Right lobe of liver (tissue), 6 donors: ENCODE measurements at regions of chr3 and their contacts with region 1.

Region 1: GRCh38 chr3:194404365-194405140 is 5.5 kb upstream of the GP5 start:
- DNase-seq: no peak
- ATAC-seq: peak; percentile 34 to 78 (median 68)
- H3K4me3 ChIP-seq: no peak overlapping the region
- H3K27ac ChIP-seq: no peak overlapping the region
- H3K4me1 ChIP-seq: no peaks in the 10 kb centered on the region
- H3K27me3 ChIP-seq: no peaks in the 10 kb centered on the region
- CTCF ChIP-seq: peak; percentile 63 to 78 (median 69)
- POLR2A ChIP-seq: no peak

Region 2: DNA sequence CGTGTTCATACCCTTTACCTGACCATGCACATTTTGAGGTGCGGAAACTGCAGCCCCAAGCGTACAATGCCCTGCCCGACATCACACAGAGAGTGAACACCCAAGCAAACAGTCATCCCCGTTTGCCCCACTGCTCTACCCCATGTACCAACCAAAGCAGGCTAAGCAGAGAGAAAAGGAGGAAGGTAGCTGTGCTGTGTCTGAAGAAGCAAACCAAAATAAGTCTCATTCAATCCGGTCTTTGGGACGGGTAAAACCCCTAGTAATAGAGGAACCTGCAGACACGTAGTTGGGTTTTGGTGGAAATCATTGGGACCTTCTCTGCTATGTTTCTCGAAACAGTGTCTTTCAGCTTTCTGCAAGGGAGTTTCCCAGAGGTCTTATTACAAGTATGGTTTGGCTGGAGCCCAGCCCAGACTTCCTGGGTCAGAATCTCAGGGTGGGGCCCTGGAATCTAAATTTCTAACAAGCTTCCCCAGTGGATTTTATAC is 433.2 kb before region 1 on chr3:
- intact Hi-C with region 1: no loop called
- DNase-seq: no peak
- ATAC-seq: peak in 3 of 4 donors; percentile 6 to 31 (median 26)
- H3K4me3 ChIP-seq: no peak overlapping the region
- H3K27ac ChIP-seq: no peak overlapping the region
- H3K4me1 ChIP-seq: peaks cover 0 to 11% (median 2%) of the 10 kb centered on the region in 4 donors
- H3K27me3 ChIP-seq: no peaks in the 10 kb centered on the region
- CTCF ChIP-seq: no peak
- POLR2A ChIP-seq: no peak

Region 3: GRCh38 chr3:194212845-194213320 is 191.7 kb before region 1 on chr3:
- intact Hi-C with region 1: no loop called
- DNase-seq: no peak
- ATAC-seq: no peak
- H3K4me3 ChIP-seq: no peak overlapping the region
- H3K27ac ChIP-seq: no peak overlapping the region
- H3K4me1 ChIP-seq: no peaks in the 10 kb centered on the region
- H3K27me3 ChIP-seq: no peaks in the 10 kb centered on the region
- CTCF ChIP-seq: no peak
- POLR2A ChIP-seq: no peak

Region 4: GRCh38 chr3:194344012-194344411 is 60.5 kb before region 1 on chr3:
- intact Hi-C with region 1: loop called (anchors 5 kb)
- DNase-seq: peak; percentile 72 to 73 (median 73)
- ATAC-seq: peak; percentile 72 to 81 (median 76)
- H3K4me3 ChIP-seq: no peak overlapping the region
- H3K27ac ChIP-seq: no peak overlapping the region
- H3K4me1 ChIP-seq: peaks cover 0 to 12% (median 0%) of the 10 kb centered on the region in 4 donors
- H3K27me3 ChIP-seq: no peaks in the 10 kb centered on the region
- CTCF ChIP-seq: peak; percentile 54 to 92 (median 88)
- POLR2A ChIP-seq: no peak

Region 5: GRCh38 chr3:194353956-194354714 is 50.4 kb before region 1 on chr3:
- intact Hi-C with region 1: no loop called
- DNase-seq: no peak
- ATAC-seq: no peak
- H3K4me3 ChIP-seq: no peak overlapping the region
- H3K27ac ChIP-seq: no peak overlapping the region
- H3K4me1 ChIP-seq: peaks cover 0 to 3% (median 0%) of the 10 kb centered on the region in 4 donors
- H3K27me3 ChIP-seq: no peaks in the 10 kb centered on the region
- CTCF ChIP-seq: no peak
- POLR2A ChIP-seq: no peak